ENCODE measurements at regions of chr7 and their contacts with region 1.

Region 1: DNA sequence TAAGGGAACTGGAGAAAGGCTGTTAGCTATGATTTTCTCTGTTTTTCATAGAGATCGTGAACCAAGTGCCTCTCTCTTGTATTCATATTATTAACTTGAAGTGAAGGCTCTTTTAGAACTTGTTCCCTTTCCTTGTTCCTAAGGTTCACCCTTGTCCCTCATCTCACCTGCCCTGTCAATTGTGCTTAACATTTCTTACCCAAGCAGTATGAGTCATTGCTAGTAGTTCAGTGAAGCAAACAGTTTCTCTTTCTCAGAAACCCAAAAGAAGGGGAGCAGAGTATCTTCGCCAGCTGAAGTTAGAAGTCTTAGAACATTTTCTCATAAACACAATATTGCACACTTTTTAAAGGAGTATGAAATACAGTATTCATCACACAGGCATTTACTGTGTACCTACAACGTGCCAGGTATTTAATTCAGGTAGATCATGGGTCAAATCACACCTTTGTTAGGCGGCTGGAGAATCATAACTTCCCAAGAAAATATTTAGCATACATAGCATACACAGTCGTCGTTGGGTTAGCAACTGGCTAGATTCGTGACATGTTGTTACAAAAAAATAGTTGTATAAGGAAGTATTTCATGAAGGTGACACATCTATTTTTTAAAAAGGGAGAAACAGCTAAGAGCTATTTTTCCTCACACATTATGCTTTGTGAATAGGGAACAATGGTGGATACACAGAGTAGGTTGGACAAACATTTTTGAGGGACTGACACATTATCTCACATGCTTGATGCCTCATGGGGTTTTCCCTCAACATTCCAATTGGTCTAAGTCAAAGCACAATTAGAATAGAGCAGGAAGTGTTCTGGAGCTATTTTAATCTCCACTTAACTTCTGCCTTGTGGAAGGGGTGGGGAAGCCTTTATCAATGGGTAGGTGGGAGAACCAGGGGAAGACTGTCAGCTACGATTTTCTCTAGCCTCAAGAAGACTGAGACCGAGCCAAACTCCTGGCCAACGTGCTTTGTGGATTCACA is 13.2 kb downstream of the HDAC9 start:
- DNase-seq: peak; percentile 92
- ATAC-seq: peak; percentile 92
- H3K4me3 ChIP-seq: peak overlapping the region; percentile 73
- H3K27ac ChIP-seq: peak overlapping the region; percentile 99
- H3K4me1 ChIP-seq: peaks cover 38% of the 10 kb centered on the region
- H3K27me3 ChIP-seq: no peaks in the 10 kb centered on the region
- CTCF ChIP-seq: no peak

Region 2: DNA sequence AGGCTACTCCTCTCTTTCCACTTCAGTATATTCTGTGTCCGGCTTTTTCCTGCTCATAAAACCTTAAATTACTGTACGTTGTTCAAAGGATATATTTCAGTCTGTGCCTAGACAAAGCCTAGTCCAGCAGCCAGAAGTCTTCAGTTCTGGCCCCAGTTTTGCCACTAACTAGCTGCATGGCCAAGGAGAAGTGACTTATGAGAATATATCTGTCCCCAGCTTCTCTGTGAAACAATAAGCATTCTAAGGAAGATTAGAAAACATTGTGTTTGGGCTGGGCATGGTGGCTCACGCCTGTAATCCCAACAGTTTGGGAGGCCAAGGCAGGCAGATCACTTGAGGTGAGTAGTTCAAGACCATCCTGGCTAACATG is 118.2 kb before region 1 on chr7:
- CTCF ChIA-PET with region 1: no interaction called
- POLR2A ChIA-PET with region 1: no interaction called
- intact Hi-C with region 1: no loop called
- DNase-seq: no peak
- ATAC-seq: no peak
- H3K4me3 ChIP-seq: no peak overlapping the region; the same call in 1 of the 2 replicates
- H3K27ac ChIP-seq: peak overlapping the region; percentile 77
- H3K4me1 ChIP-seq: peaks cover 17% of the 10 kb centered on the region
- H3K27me3 ChIP-seq: no peaks in the 10 kb centered on the region
- CTCF ChIP-seq: no peak

Region 3: GRCh38 chr7:18495412-18496340 is 13.1 kb before region 1 on chr7 and contains the start of gene HDAC9:
- CTCF ChIA-PET with region 1: no interaction called
- POLR2A ChIA-PET with region 1: interaction called, 19 read pairs
- intact Hi-C with region 1: no loop called
- DNase-seq: no peak
- ATAC-seq: peak; percentile 55; the same call in 1 of the 2 replicates
- H3K4me3 ChIP-seq: no peak within 1 kb of the TSS
- H3K27ac ChIP-seq: no peak within 1 kb of the TSS
- H3K4me1 ChIP-seq: peaks cover 6% of the 10 kb centered on the region
- H3K27me3 ChIP-seq: no peaks in the 10 kb centered on the region
- CTCF ChIP-seq: no peak
- total RNA-seq, gene HDAC9: 6.8 and 7.8 TPM in 2 replicates

Region 4: DNA sequence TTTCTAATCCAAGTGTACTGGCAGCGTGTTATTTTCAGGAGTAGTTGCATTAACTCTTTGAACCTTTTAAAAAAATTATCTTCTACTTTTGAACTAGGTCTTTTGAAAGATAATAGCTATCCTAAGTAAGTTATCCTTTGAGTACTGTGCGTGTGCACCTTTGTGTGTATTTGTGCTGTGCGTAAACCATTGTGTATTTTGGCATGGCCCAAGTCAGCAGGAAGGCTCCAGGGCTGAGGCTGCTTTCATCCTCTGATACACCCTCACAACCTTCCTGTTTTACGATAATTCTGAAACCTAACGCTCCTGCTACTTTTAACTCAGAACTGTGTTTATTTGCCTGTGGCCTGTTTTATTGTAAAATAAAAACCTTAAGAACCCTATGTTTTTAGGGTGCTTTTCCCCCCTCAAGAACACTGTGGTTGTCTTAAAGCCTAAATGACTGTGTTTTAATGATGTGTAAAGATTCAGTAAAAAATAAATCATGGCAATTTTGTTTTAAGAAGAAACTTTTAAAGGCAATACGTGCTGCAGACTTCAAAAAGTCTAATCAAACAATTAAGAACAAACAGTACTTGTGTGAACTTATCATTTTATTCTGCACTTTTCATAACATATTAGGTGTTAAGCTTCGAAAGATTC is 44.3 kb after region 1 on chr7:
- CTCF ChIA-PET with region 1: interaction called, 4 read pairs
- POLR2A ChIA-PET with region 1: interaction called, 5 read pairs
- intact Hi-C with region 1: loop called (anchors 1 kb)
- DNase-seq: peak; percentile 80
- ATAC-seq: peak; percentile 82
- H3K4me3 ChIP-seq: peak overlapping the region; percentile 50
- H3K27ac ChIP-seq: peak overlapping the region; percentile 90
- H3K4me1 ChIP-seq: peaks cover 58% of the 10 kb centered on the region
- H3K27me3 ChIP-seq: no peaks in the 10 kb centered on the region
- CTCF ChIP-seq: no peak

Measured in PC-3 (cell line).